ENCODE measurements at regions of chr19 and their contacts with region 1.

Region 1: DNA sequence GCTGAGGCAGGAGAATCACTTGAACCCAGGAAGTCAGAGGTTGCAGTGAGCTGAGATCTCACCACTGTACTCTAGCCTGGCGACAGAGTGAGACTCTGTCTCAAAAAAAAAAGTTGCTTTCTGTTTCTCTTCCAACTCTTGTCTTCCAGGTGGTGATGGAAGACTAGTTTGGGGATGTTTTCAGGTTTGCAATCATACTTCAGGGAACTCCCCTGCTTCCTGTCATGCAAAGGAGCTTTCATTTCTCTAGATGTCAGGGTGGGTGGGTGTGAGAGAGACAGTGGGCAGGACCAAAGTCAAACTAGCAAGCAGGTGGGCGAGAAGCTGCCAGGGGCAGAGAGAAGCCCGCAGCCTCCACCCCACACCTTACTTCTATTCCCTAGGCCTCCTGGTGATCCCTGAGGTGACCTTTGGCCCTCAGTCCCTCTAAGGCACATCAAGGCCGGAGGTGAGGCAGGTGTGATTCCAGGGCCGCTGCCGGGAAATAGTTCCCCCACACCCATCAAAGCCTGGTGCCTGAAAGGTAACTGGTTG is 25.7 kb downstream of the CCNE1 start:
- DNase-seq: no peak
- ATAC-seq: no peak
- H3K4me3 ChIP-seq: no peak overlapping the region; a peak in 1 of 6 replicates
- H3K27ac ChIP-seq: no peak overlapping the region
- H3K4me1 ChIP-seq: peaks cover 39% of the 10 kb centered on the region
- H3K27me3 ChIP-seq: no peaks in the 10 kb centered on the region
- CTCF ChIP-seq: no peak
- EP300 ChIP-seq: no peak
- POLR2A ChIP-seq: no peak
- RAD21 ChIP-seq: no peak

Region 2: GRCh38 chr19:29819986-29820385 is 17.5 kb before region 1 on chr19:
- CTCF ChIA-PET with region 1: no interaction called
- POLR2A ChIA-PET with region 1: no interaction called
- in situ Hi-C with region 1: no loop called
- intact Hi-C with region 1: loop called (anchors 2 kb)
- DNase-seq: no peak
- ATAC-seq: no peak
- H3K4me3 ChIP-seq: no peak overlapping the region
- H3K27ac ChIP-seq: no peak overlapping the region
- H3K4me1 ChIP-seq: no peaks in the 10 kb centered on the region
- H3K27me3 ChIP-seq: no peaks in the 10 kb centered on the region
- CTCF ChIP-seq: no peak
- EP300 ChIP-seq: no peak
- POLR2A ChIP-seq: no peak
- RAD21 ChIP-seq: no peak

Measured in HepG2 (cell line).